Activated CD4-positive, alpha-beta T cell treated with anti-CD3 and anti-CD28 coated beads for 36 hours (primary cell): ENCODE measurements at regions of chr4 and their contacts with region 1.

Region 1: DNA sequence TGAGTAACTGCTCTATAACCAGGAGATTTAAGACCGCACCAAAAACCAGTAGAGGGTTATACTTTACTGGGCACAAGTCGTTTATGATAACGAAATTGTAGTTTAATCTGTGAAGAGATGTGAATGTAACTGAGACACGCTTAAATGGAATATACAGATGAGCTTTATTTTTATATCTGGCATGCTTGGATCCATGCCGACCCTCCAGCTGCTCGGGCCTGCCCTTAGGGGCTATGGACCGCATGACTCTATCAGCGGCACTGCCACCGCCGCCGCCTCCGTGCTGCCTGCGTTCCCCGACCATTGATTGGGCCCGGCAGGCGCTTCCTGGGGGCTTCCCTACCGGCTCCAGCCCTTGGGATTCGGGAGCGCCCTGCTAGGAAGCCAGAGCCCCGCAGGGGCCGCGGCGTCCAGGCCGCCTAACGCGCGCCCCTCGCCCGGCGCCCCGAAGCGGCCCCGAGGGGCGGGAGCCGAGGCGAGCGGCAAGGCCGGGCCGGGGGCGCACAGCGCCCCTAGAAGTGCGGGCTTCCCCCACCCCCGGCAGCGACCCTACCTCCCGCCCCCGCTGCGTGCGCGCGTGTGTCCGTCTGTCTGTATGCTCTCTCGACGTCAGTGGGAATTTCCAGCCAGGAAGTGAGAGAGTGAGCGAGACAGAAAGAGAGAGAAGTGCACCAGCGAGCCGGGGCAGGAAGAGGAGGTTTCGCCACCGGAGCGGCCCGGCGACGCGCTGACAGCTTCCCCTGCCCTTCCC is at the start of gene NFKB1:
- DNase-seq: peak; percentile 88
- ATAC-seq: peak; percentile 72
- H3K4me3 Mint-ChIP-seq: peak within 1 kb of the TSS; percentile 97
- H3K27ac Mint-ChIP-seq: peak within 1 kb of the TSS; percentile 96
- H3K4me1 Mint-ChIP-seq: peaks cover 26% of the 10 kb centered on the region
- H3K27me3 Mint-ChIP-seq: no peaks in the 10 kb centered on the region
- total RNA-seq, gene NFKB1: 167 to 174 TPM

Region 2: DNA sequence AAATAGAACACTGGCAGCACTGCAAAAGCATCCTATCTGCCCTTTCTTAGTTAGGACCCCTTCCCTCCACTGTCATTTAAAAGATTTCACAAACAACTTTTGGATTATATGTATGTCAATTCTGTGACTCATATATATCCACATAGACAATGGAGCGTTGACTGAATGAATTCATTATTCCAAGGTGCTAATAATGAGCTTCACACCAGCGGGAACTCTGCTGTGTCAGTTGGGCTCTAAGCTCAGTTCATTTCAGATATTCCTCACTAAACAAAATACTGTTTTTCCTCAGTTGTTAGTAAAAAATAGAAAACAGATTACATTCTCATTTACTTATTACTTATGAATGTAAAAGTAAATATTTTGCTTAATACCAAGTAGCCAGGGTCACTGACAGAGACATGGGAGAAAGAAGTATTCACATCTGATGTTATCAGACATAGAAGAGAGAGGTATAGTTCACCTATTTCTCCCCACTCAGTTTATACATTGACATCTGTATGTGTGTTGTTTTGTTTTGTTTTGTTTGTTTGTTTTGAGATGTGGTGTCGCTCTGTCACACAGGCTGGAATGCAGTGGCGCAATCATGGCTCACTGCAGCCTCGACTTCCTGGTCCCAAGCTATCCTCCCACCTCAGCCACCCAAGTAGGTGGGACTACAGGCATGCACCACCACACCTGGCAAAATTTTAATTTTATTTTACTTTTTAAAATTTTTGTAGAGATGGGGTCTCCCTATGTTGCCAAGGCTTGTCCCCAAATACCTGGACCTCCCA is 11.1 kb after region 1 on chr4:
- CTCF ChIA-PET with region 1: interaction called, 11 read pairs
- POLR2A ChIA-PET with region 1: interaction called, 5 read pairs
- intact Hi-C with region 1: loop called in 1 of 2 experiments (anchors 2 kb)
- DNase-seq: no peak
- ATAC-seq: no peak
- H3K4me3 Mint-ChIP-seq: no peak overlapping the region
- H3K27ac Mint-ChIP-seq: no peak overlapping the region
- H3K4me1 Mint-ChIP-seq: peaks cover 78% of the 10 kb centered on the region
- H3K27me3 Mint-ChIP-seq: no peaks in the 10 kb centered on the region

Region 3: GRCh38 chr4:102535398-102536082 is 34.7 kb after region 1 on chr4:
- CTCF ChIA-PET with region 1: interaction called, 4 read pairs
- POLR2A ChIA-PET with region 1: no interaction called
- intact Hi-C with region 1: loop called (anchors 2 to 5 kb)
- DNase-seq: no peak
- ATAC-seq: peak; percentile 90
- H3K4me3 Mint-ChIP-seq: peak overlapping the region; percentile 39
- H3K27ac Mint-ChIP-seq: peak overlapping the region; percentile 25
- H3K4me1 Mint-ChIP-seq: peaks cover 58% of the 10 kb centered on the region
- H3K27me3 Mint-ChIP-seq: no peaks in the 10 kb centered on the region

Region 4: GRCh38 chr4:102610007-102610406 is 109.1 kb after region 1 on chr4:
- CTCF ChIA-PET with region 1: interaction called, 3 read pairs
- POLR2A ChIA-PET with region 1: no interaction called
- intact Hi-C with region 1: loop called in 1 of 2 experiments (anchors 2 kb)
- DNase-seq: no peak
- ATAC-seq: no peak
- H3K4me3 Mint-ChIP-seq: no peak overlapping the region
- H3K27ac Mint-ChIP-seq: peak overlapping the region; percentile 35
- H3K4me1 Mint-ChIP-seq: peaks cover 77% of the 10 kb centered on the region
- H3K27me3 Mint-ChIP-seq: no peaks in the 10 kb centered on the region

Region 5: DNA sequence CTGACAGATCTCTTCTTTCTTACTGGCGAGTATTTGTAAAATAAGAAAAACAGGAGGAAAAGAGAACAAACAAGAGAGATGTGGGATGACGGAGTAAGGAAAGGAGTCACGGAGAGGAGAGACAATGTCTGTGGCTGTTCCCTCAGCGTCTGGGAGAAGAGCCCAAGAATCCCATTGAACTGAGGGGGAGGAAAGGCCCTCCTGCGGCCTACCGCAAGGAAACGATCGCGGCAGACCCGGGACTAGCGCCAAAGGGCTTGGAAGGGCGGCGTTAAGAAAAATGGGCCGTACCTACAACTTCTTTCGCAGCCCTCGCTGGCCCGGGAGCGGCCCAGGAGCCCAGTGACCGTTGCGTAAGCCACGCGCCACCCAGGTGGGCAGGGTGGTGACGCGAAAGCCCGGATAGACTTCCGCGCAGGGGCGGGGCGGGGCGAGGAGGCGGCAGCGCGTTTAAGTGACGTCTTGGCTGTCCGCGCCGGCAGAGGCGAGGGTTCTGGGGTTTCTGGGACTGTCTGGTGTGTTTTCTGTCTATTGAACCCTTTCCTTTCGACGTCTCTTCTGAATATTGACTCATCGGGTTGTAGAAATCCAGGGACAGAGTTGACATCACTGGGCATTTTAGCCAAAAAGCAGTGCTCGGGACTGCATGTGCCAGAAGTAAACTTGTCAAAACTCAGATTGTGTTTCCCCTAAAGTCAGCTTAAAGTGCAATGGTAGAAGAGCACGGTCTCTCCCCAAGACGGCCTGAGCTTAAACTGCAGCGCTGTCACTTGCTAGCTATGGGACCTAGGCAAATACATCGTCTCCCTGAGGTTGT is 518.6 kb after region 1 on chr4 and contains the start of gene SLC9B1:
- CTCF ChIA-PET with region 1: no interaction called
- POLR2A ChIA-PET with region 1: no interaction called
- intact Hi-C with region 1: loop called in 1 of 2 experiments (anchors 2 kb)
- DNase-seq: peak; percentile 97
- ATAC-seq: peak; percentile 98
- H3K4me3 Mint-ChIP-seq: peak within 1 kb of the TSS; percentile 86
- H3K27ac Mint-ChIP-seq: peak within 1 kb of the TSS; percentile 97
- H3K4me1 Mint-ChIP-seq: peaks cover 19% of the 10 kb centered on the region
- H3K27me3 Mint-ChIP-seq: no peaks in the 10 kb centered on the region
- total RNA-seq, gene SLC9B1: 1.8 to 3.7 TPM